ENCODE measurements at regions of chr19 and their contacts with region 1.

Region 1: GRCh38 chr19:19361075-19361594 is 40.5 kb downstream of the MAU2 start:
- DNase-seq: peak; percentile 79

Region 2: GRCh38 chr19:19342756-19343322 is 18.3 kb before region 1 on chr19:
- CTCF ChIA-PET with region 1: interaction called, 10 read pairs
- POLR2A ChIA-PET with region 1: no interaction called
- DNase-seq: peak; percentile 86

Region 3: DNA sequence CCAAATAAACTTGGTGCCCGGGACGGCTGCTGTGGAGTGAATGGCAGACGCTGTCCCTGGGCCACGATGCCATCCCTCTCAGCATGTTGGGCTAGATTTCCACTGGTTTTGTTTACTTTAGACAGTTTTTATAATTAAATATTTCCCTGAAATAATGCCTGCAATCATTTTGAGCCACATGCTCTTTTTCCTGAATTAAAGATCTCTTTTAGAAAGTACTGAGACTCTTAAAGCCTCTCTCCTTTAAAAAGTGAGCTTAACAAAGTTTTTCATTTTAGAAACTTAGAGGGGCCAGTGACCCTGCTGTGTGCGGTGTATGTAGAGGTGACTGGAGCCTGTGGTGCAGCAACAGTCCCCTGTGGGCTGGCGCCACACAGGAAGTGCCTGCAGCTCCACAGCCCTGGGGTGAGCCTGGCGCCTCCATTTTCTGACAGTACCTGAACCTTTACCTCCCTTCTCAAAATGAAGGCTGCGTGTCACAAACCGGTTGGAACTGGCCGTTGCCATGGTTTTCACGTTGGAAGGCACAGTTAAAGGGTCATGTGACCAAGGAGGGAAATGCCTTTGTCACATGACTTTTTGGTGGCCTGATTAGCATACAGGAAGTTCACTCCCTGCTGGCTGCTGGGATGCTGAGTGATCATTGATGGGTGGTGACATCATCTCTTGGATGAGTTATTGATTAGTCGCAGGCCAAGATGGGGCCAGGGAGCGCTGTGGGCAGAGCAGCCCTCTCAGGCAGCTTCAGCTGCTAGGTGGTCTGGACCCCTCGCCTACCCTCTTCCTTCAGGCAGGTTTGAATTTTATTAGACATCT is 127.9 kb after region 1 on chr19:
- CTCF ChIA-PET with region 1: interaction called, 19 read pairs
- POLR2A ChIA-PET with region 1: interaction called, 7 read pairs
- DNase-seq: peak; percentile 65

Measured in HEK293T (cell line).